GM10248 (cell line): ENCODE measurements at regions of chr7 and their contacts with region 1.

Region 1: DNA sequence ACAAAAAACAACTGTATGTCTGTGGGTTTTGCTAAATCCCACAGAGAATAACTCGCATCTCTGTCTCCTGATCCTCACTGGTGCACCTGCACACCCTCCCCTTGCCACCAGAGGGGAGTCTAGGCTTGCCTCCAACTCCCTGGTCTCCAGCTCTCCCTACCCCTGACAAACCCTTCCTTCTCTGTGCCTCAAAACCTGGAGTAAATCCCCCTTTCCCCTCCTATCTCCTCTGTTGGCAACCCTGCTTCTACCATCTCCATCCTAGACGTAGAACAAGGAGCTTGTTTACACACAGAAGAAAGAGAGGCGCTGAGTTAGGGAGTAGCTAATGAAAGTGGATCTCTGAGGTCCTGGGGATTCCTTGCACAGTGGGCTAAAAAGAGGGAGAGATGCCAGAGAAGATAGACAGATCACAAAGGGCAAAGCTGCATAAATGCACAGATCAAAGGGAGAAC is 6.0 kb downstream of the MBLAC1 start:
- DNase-seq: peak; percentile 81
- CTCF ChIP-seq: peak; percentile 97

Region 2: GRCh38 chr7:98922393-98923187 is 1210.1 kb before region 1 on chr7:
- CTCF ChIA-PET with region 1: no interaction called
- POLR2A ChIA-PET with region 1: no interaction called
- DNase-seq: no peak
- CTCF ChIP-seq: no peak

Region 3: GRCh38 chr7:99693100-99693426 is 439.7 kb before region 1 on chr7:
- CTCF ChIA-PET with region 1: no interaction called
- POLR2A ChIA-PET with region 1: no interaction called
- DNase-seq: no peak
- CTCF ChIP-seq: no peak

Region 4: GRCh38 chr7:99928994-99929729 is 203.6 kb before region 1 on chr7 and contains the start of gene GJC3:
- CTCF ChIA-PET with region 1: no interaction called
- POLR2A ChIA-PET with region 1: no interaction called
- DNase-seq: peak; percentile 58
- CTCF ChIP-seq: peak; percentile 34

Region 5: GRCh38 chr7:99975782-99976521 is 156.8 kb before region 1 on chr7 and contains the start of gene AZGP1:
- CTCF ChIA-PET with region 1: interaction called, 15 read pairs
- POLR2A ChIA-PET with region 1: no interaction called
- DNase-seq: no peak
- CTCF ChIP-seq: no peak

Region 6: GRCh38 chr7:100044701-100045100 is 88.0 kb before region 1 on chr7:
- CTCF ChIA-PET with region 1: no interaction called
- POLR2A ChIA-PET with region 1: no interaction called
- DNase-seq: peak; percentile 39
- CTCF ChIP-seq: peak; percentile 20

Region 7: DNA sequence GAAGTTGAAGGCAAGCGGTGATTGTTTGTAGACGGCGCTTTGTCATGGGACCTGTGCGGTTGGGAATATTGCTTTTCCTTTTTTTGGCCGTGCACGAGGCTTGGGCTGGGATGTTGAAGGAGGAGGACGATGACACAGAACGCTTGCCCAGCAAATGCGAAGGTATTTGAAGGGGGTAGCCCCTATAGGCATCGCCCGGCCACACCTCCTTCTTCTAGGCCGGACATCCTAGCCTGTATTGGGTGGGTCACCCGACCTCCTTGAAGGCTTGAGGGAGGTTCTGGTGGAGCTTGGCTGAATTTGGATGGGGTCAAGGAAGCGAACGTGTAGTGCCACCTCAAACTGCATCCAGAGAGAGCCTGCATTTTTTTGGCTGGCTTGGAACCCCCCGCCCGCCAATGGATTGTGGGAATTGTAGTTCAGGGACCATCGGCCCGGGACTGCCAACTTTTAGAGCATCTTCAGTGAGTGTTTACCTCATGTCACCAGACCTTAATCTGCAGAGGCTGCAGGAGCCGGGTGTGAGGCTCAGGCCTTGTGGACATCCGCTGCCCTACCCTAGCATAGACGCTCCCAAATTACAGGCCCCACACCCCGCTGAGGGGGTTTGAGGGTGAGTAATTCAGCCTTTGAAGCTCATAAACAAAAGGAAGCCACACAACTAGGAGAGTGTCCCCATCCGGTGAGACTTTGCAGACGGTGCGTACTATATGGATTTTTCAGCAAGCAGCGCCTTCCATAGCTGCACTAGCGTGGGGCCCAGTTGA is 12.8 kb before region 1 on chr7:
- CTCF ChIA-PET with region 1: interaction called, 53 read pairs
- POLR2A ChIA-PET with region 1: no interaction called
- DNase-seq: peak; percentile 79
- CTCF ChIP-seq: no peak

Region 8: DNA sequence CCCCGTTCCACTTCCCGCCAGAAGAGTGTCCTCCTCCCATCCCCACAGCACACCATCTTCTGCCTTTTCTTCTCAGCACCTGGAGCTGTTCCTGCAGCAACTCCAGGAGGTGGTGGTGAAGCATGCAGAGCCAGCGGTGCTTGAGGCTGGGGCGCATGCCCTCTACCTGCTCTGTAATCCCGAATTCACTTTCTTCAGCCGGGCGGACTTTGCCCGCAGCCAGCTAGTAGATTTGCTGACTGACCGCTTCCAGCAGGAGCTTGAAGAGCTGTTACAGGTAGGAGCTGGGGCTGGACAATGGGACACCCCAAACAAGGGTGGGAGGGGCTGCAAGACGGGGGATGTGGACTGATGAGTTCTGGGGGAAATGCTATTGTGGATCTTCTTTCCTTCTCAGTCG is 68.0 kb after region 1 on chr7:
- CTCF ChIA-PET with region 1: interaction called, 10 read pairs
- POLR2A ChIA-PET with region 1: no interaction called
- DNase-seq: no peak
- CTCF ChIP-seq: no peak

Region 9: DNA sequence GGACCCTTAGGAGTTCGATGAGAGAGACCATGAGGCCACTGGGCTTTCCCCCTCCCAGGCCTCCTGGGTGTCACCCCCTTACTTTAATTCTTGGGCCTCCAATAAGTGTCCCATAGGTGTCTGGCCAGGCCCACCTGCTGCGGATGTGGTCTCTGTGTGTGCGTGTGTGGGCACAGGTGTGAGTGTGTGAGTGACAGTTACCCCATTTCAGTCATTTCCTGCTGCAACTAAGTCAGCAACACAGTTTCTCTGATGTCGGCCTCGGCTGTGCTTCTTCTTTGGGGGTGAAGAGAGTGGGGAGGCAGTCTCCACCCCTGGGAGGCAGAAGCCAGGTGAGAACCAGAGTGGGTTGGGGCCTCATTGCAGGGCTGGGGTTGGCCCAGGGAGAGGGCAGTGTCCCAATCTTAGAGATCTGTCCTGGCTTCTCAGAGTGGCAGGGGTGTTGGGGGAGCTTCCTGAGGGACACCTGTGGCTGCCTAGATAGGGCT is 88.6 kb after region 1 on chr7:
- CTCF ChIA-PET with region 1: interaction called, 15 read pairs
- POLR2A ChIA-PET with region 1: no interaction called
- DNase-seq: peak; percentile 81
- CTCF ChIP-seq: no peak